ENCODE measurements at regions of chr2 and their contacts with region 1.

Region 1: DNA sequence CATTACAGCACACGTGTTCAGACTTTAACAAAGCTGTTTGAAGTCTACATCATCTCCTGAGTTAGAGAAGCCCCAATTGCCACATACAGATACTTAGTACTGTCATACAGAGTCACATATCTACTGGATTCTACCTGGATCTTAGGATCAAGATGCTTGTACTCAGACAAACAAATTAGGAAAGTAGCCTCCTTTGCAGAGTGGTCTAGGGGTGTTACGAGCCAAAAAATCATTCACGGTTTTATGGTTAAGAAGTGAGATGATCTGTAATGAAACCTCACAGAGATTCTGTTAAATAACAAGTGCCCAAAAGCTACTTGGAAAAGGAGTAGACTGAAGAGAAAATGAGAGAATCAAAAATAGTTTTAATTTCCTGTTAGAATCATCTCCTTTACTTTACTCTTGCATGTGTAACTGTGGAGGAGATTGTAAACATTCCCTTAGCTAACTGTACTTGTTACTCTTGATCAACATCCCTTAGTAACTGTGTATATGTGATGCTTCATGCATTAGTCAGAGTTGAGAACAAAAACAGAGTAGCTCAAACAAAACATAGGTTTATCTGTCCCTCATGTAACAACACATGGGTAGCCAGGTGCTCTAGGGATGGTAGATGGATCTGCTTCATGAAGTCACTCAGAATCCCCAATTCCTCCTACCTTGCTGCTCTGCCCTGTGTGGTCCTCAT is 16.4 kb upstream of the IL1RL1 start:
- DNase-seq: no peak
- H3K4me3 Mint-ChIP-seq: no peak overlapping the region
- H3K27ac Mint-ChIP-seq: peak overlapping the region; percentile 81
- H3K4me1 Mint-ChIP-seq: peaks cover 70% of the 10 kb centered on the region
- H3K27me3 Mint-ChIP-seq: no peaks in the 10 kb centered on the region

Region 2: GRCh38 chr2:102310964-102311640 is 16.2 kb after region 1 on chr2 and contains the start of gene IL1RL1:
- intact Hi-C with region 1: loop called (anchors 2 kb)
- DNase-seq: no peak
- H3K4me3 Mint-ChIP-seq: peak within 1 kb of the TSS; percentile 1
- H3K27ac Mint-ChIP-seq: peak within 1 kb of the TSS; percentile 84
- H3K4me1 Mint-ChIP-seq: peaks cover 66% of the 10 kb centered on the region
- H3K27me3 Mint-ChIP-seq: no peaks in the 10 kb centered on the region
- total RNA-seq, gene IL1RL1: 10.7 and 11.1 TPM in 2 replicates